ENCODE measurements at regions of chr3 and their contacts with region 1.

Region 1: GRCh38 chr3:112111785-112112402 is 21.2 kb downstream of the GCSAM start:
- DNase-seq: no peak
- ATAC-seq: peak; percentile 79
- H3K4me3 Mint-ChIP-seq: no peak overlapping the region
- H3K27ac Mint-ChIP-seq: no peak overlapping the region
- H3K4me1 Mint-ChIP-seq: peaks cover 53% of the 10 kb centered on the region
- H3K27me3 Mint-ChIP-seq: no peaks in the 10 kb centered on the region
- CTCF ChIP-seq: peak; percentile 68

Region 2: DNA sequence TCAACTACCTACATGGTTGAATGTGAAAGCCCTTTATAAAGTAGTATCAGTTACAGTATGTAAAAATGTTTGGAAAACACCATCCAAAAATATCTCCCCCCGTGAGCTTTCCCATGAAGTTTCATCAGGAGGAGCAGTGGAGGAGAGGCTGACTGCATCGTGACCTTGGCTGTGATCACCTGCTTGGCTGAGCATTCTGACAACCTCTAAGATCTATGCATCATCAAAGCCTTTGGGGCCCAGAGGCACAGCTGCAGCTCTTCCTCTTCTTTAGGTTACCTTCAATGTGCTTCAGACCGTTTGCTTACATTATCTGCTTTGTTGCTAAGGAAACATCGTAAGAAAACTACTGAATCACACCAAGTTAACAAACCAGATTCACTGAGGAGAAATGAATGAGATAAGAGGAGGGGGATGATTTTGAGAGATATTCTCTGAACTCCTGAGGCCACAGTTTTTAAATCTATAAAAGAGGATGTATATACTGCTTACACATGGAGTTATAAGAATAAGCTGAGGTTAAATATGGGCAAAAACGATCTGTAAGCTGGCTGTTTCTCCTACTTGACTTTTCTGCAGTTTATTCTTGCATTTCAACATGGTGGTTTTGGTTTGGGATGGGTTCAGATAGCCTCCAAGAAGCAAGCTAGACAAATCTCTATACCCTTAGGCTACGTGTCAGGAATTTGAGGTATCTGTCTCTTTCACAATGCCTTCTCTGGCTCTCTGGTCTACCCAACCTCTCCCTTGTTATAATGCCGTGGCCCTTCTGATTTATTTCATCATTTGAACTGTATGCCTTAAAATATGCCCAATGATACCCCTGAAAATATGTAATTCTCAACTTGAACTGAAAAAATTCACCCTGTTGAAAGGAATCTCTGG is 17.2 kb after region 1 on chr3:
- CTCF ChIA-PET with region 1: interaction called, 11 read pairs
- POLR2A ChIA-PET with region 1: interaction called, 30 read pairs
- intact Hi-C with region 1: loop called (anchors 1 kb)
- DNase-seq: peak; percentile 39
- ATAC-seq: peak; percentile 73
- H3K4me3 Mint-ChIP-seq: peak overlapping the region; percentile 6
- H3K27ac Mint-ChIP-seq: peak overlapping the region; percentile 82
- H3K4me1 Mint-ChIP-seq: peaks cover 91% of the 10 kb centered on the region
- H3K27me3 Mint-ChIP-seq: no peaks in the 10 kb centered on the region
- CTCF ChIP-seq: no peak

Region 3: DNA sequence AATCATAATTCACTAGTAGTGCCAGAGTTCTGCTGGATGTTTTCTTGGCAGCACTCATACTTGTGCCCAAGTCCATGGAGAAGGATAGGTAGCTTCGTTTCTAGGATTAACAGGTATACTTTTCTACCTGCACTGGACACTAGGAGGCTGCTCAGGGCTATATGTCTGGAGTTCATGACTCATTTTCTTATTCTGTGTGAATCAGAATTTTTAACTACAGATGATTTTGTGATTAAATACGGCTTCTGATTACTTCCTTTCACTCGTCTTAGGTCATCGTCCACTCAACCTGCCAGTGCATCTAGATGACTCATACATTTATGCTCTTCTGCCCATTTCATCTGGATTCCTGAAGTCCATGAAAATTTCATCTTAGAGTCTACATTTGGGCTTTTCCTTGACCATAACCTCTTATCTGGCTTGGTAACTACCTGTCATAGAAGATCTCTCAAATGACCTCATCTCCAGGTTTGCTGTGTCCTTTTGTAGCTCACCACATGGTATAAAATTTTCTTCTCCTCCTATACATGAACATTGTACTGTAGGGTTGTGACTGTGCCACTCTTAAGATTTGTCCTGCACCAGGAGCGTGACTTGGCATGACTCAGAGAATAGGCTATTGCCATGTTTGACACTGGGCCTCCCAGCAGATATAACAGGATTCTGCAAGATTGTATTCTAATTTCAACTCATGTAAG is 87.9 kb after region 1 on chr3:
- CTCF ChIA-PET with region 1: no interaction called
- POLR2A ChIA-PET with region 1: no interaction called
- intact Hi-C with region 1: no loop called
- DNase-seq: no peak
- ATAC-seq: no peak
- H3K4me3 Mint-ChIP-seq: no peak overlapping the region
- H3K27ac Mint-ChIP-seq: no peak overlapping the region
- H3K4me1 Mint-ChIP-seq: no peaks in the 10 kb centered on the region
- H3K27me3 Mint-ChIP-seq: no peaks in the 10 kb centered on the region
- CTCF ChIP-seq: no peak

Region 4: DNA sequence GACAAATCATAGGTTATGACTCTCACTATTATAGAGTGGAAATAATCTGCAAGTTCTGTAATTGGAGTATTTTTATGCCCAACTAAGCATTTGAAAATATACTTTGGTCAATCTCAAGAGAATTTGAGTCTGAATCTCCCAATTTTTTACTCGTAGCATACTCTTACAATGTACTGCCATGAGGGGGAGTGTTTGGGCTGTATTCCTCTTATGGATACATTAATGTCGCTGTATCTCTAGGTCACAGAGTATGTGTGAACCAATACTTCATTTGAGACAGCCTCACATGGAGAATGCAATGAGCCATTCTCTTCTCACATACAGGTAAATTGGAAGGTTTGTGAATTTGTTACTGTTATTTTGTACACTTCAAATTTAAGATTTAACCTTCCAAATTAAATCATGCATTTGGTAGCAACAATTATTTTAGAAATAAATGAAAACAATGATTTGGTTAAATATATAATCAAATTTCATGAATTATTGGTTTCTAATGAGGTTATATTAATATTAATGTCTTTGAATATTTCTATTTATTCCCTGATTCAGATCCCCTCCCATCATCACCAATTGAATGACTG is 215.6 kb after region 1 on chr3:
- CTCF ChIA-PET with region 1: interaction called, 27 read pairs
- POLR2A ChIA-PET with region 1: no interaction called
- intact Hi-C with region 1: loop called (anchors 1 kb)
- DNase-seq: no peak
- ATAC-seq: peak; percentile 100
- H3K4me3 Mint-ChIP-seq: no peak overlapping the region
- H3K27ac Mint-ChIP-seq: no peak overlapping the region
- H3K4me1 Mint-ChIP-seq: peaks cover 17% of the 10 kb centered on the region
- H3K27me3 Mint-ChIP-seq: no peaks in the 10 kb centered on the region
- CTCF ChIP-seq: no peak

Region 5: DNA sequence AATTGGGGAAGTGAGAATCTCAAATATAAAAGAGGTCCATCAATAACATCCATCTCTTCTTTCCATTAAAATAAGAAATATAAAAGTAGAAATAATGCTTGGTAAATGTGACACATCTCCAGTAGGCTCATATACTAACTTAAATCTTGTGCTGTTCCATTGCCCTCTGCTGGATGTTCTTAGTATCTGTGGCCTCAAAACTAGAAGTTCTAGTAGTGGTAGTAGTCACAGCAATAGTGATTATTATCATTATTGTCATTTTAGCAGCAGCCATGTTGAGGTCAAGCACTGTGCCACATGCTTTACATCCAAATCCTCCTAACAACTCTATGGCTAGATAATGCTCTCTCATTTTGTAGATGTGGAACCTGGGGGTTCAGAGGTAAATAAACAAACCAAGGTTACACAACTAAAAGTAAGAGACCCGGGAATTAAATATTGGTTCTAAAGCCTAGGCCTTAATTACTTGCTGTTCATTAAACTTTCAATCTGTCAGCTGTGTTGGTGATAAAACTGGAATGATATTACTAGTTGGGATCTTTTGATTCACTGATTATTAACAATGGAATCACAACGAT is 407.6 kb after region 1 on chr3:
- CTCF ChIA-PET with region 1: interaction called, 29 read pairs
- POLR2A ChIA-PET with region 1: interaction called, 7 read pairs
- intact Hi-C with region 1: loop called (anchors 1 kb)
- DNase-seq: no peak
- ATAC-seq: peak; percentile 75
- H3K4me3 Mint-ChIP-seq: peak overlapping the region; percentile 58
- H3K27ac Mint-ChIP-seq: peak overlapping the region; percentile 89
- H3K4me1 Mint-ChIP-seq: peaks cover 41% of the 10 kb centered on the region
- H3K27me3 Mint-ChIP-seq: no peaks in the 10 kb centered on the region
- CTCF ChIP-seq: no peak

Region 6: DNA sequence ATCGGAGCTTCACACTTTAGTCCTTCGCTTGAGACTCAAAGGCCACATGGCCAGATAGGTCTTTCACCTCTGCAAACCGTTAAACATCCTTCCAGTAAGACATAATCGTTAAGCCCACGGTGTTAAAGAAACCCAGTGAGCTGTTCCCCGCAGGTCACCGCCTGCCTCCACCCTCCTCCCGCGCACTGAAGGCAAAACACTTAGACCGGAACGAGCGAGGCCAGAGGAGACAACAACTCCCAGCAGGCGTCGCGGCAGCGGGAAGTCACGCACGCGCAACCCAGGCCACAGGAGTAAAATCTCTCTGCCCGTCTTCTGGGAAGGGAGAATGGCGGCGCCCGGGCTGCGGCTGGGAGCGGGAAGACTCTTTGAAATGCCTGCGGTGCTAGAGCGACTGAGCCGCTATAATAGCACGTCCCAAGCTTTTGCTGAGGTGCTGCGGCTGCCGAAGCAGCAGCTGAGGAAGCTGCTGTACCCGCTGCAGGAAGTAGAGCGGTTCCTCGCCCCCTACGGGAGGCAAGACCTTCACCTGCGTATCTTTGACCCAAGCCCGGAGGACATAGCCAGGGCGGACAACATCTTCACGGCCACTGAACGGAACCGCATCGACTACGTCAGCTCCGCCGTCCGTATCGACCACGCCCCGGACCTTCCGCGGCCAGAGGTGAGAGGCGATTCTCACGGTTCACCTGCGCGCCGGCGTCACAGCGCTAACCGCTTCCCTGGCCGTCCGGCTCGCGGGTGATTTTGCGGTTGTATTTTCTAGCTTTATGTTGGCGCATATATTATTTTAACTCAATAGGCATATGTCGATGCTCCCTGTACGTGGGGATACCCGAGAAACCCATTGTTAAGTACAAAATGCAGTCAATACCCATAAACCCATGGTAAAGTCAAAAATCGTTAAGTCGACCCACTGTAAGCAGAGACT is 879.0 kb after region 1 on chr3 and contains the start of gene GTPBP8:
- CTCF ChIA-PET with region 1: no interaction called
- POLR2A ChIA-PET with region 1: no interaction called
- intact Hi-C with region 1: loop called (anchors 10 kb)
- DNase-seq: peak; percentile 79
- ATAC-seq: peak; percentile 86
- H3K4me3 Mint-ChIP-seq: peak within 1 kb of the TSS; percentile 92
- H3K27ac Mint-ChIP-seq: peak within 1 kb of the TSS; percentile 92
- H3K4me1 Mint-ChIP-seq: peaks cover 27% of the 10 kb centered on the region
- H3K27me3 Mint-ChIP-seq: no peaks in the 10 kb centered on the region
- CTCF ChIP-seq: no peak
- total RNA-seq, gene GTPBP8: 14.3 and 18.1 TPM in 2 replicates